SK-N-SH (cell line): ENCODE measurements at regions of chr17 and their contacts with region 1.

Region 1: GRCh38 chr17:59004338-59005111 is 102.2 kb downstream of the TRIM37 start:
- DNase-seq: peak; percentile 63
- H3K4me3 ChIP-seq: no peak overlapping the region; a peak in 1 of 4 replicates
- H3K27ac ChIP-seq: no peak overlapping the region
- H3K4me1 ChIP-seq: peaks cover 0 to 5% of the 10 kb centered on the region in 2 experiments; a peak in 2 of 4 replicates
- H3K27me3 ChIP-seq: no peaks in the 10 kb centered on the region
- CTCF ChIP-seq: peak; percentile 100
- EP300 ChIP-seq: no peak
- RAD21 ChIP-seq: peak; percentile 98

Region 2: GRCh38 chr17:58517734-58518609 is 486.6 kb before region 1 on chr17:
- CTCF ChIA-PET with region 1: interaction called, 43 read pairs
- POLR2A ChIA-PET with region 1: interaction called, 14 read pairs
- DNase-seq: peak; percentile 96
- H3K4me3 ChIP-seq: peak overlapping the region; percentile 87 to 95
- H3K27ac ChIP-seq: peak overlapping the region; percentile 92 to 97
- H3K4me1 ChIP-seq: peaks cover 5 to 25% of the 10 kb centered on the region in 2 experiments; a peak in 2 of 4 replicates
- H3K27me3 ChIP-seq: no peaks in the 10 kb centered on the region
- CTCF ChIP-seq: no peak
- EP300 ChIP-seq: peak; percentile 18 to 30; a peak in 2 of 4 replicates
- RAD21 ChIP-seq: no peak

Region 3: DNA sequence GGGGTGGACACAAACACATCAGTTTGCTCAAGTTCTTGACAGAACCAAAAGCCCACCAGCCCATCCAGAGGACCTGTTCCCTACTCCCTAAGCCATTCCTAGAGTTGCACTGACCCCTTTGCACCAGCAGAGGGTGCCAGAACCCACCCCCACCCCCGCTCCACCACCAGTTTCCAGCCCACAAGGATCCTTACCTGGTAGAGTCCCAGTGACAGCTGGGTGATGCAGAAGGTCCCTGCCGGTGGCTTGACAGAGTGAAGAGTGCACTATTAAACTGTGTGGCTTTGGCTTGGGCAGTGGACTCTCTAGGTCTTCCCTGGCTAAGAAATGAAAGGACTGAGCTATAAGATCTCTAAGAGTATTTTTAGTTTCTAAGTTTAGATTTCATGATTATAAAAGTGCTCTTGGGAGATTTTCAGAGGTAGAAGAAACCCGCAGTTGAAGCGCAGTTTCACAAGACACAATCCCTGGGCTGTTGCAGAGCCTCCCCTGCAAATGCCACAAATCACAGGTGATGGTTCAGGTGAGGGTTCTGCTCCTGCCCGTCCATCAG is 416.7 kb before region 1 on chr17:
- CTCF ChIA-PET with region 1: interaction called, 66 read pairs
- POLR2A ChIA-PET with region 1: no interaction called
- DNase-seq: peak; percentile 88
- H3K4me3 ChIP-seq: no peak overlapping the region
- H3K27ac ChIP-seq: no peak overlapping the region
- H3K4me1 ChIP-seq: no peaks in the 10 kb centered on the region; a peak in 1 of 4 replicates
- H3K27me3 ChIP-seq: no peaks in the 10 kb centered on the region
- CTCF ChIP-seq: peak; percentile 99
- EP300 ChIP-seq: no peak
- RAD21 ChIP-seq: peak; percentile 91

Region 4: DNA sequence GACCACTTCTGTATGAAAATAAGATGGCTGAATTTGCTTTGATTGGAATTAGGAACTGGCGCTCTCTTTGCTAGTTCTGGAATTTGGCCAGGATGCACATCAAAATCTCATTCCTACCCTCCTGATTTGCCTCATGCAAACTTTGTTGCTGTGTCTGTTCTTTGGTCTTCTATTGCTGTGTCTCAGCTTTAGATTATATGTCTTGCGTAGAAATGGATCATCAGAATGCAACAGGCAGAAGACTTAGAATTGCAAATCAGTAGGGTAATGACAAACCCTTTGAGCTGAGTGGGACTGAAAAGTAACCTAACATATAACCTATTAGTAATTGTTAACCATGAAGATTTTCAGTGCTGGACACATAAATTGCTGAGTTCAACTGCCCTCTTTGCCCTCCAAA is 281.8 kb before region 1 on chr17:
- CTCF ChIA-PET with region 1: interaction called, 10 read pairs
- POLR2A ChIA-PET with region 1: interaction called, 4 read pairs
- DNase-seq: no peak
- H3K4me3 ChIP-seq: no peak overlapping the region
- H3K27ac ChIP-seq: no peak overlapping the region
- H3K4me1 ChIP-seq: no peaks in the 10 kb centered on the region
- H3K27me3 ChIP-seq: no peaks in the 10 kb centered on the region
- CTCF ChIP-seq: no peak
- EP300 ChIP-seq: no peak
- RAD21 ChIP-seq: no peak

Region 5: DNA sequence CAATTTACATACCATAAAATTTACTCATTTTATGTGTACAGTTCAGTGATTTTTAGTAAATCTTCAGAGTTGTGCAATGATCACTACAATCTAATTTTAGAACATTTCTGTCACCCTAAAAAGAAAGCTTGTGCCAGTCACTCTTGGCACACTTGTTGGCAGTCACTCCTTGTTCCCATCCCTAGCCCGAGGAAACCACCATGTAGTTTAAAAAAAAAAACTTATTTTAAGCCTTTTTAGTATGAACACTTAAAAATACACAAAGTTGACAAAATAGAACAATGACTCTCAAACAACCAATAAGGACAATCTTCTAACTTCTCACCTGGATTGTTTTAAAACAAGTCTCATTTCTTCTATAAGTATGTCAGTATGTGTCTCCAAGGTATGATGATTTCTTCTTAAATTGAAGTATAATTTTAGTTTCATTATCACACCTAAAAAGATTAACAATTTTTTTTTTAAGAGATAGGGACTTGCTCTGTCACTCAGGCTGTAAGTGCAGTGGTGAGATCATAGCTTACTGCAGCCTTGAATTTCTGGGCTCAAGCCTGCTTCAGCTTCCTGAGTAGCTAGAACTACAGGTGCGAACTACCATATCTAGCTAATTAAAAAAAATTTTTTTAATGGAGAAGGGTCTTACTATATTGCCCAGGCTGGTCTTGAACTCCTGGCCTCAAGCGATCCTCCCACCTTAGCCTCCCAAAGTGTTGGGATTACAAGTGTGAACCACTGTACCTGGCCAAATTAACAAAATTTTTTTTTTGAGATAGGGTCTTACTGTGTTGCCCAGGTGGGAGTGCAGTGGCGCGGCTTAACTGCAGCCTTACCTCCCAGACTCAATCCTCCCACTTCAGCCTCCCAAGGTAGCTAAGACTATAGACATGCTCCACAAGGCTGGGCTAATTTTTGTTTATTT is 195.6 kb before region 1 on chr17:
- CTCF ChIA-PET with region 1: no interaction called
- POLR2A ChIA-PET with region 1: no interaction called
- DNase-seq: no peak
- H3K4me3 ChIP-seq: no peak overlapping the region
- H3K27ac ChIP-seq: no peak overlapping the region
- H3K4me1 ChIP-seq: no peaks in the 10 kb centered on the region
- H3K27me3 ChIP-seq: no peaks in the 10 kb centered on the region; the same call in 1 of the 2 replicates
- CTCF ChIP-seq: no peak
- EP300 ChIP-seq: no peak
- RAD21 ChIP-seq: no peak

Region 6: DNA sequence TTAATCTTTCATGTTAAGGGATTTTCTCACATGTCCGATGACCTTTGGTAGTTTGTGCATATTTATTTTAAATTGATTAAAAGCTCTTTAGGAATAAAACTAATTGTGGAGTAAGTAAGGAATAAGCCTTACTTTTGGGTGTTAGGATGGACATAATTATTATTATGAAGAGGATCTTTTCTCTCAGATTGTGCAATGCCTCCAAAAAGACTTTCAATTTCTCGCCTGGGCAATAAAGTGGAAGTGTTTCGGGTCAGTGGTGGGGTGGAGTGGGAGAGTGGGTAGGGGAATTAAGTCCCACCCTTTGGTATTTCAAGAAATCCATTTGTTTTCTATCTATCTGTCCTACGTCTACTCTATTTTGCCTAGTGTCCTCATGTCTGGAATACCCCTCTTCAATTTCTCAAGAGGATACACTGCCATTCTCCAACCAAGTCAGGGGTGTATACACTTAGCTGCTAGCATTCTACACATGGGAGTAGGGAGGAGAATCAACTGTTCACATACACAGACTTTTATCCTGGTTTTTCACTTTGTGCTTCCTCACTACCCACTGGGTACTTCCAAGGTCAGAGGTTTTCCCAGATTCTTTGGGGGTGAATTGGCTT is 119.0 kb before region 1 on chr17:
- CTCF ChIA-PET with region 1: no interaction called
- POLR2A ChIA-PET with region 1: no interaction called
- DNase-seq: no peak
- H3K4me3 ChIP-seq: no peak overlapping the region
- H3K27ac ChIP-seq: no peak overlapping the region
- H3K4me1 ChIP-seq: no peaks in the 10 kb centered on the region
- H3K27me3 ChIP-seq: no peaks in the 10 kb centered on the region
- CTCF ChIP-seq: no peak
- EP300 ChIP-seq: no peak
- RAD21 ChIP-seq: no peak

Region 7: GRCh38 chr17:58991718-58992331 is 12.7 kb before region 1 on chr17:
- CTCF ChIA-PET with region 1: interaction called, 21 read pairs
- POLR2A ChIA-PET with region 1: no interaction called
- DNase-seq: no peak
- H3K4me3 ChIP-seq: no peak overlapping the region
- H3K27ac ChIP-seq: peak overlapping the region in 1 of 2 experiments; percentile 9; a peak in 1 of 4 replicates
- H3K4me1 ChIP-seq: peaks cover 0 to 4% of the 10 kb centered on the region in 2 experiments; a peak in 1 of 4 replicates
- H3K27me3 ChIP-seq: no peaks in the 10 kb centered on the region
- CTCF ChIP-seq: no peak
- EP300 ChIP-seq: no peak
- RAD21 ChIP-seq: no peak